K562 (cell line): ENCODE measurements at regions of chr12 and their contacts with region 1.

Region 1: DNA sequence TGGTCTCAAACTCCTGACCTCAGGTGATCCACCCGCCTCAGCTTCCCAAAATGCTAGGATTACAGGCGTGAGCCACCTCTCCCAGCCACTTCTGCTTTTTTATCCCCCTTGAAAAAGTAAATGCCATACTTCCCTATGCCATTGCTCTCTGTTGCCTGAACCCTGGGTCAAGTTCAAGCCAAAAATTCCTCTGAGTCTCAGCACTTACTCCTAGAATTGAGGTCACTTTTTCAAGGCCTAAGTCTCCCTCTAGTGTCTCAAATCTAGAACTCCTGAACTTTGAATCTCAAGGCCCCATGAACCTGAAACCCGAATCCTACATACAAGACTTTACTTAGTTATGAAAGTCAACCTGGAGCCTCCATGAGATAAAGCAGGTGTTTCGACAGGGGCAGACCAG is 1.4 kb upstream of the APOBEC1 start:
- DNase-seq: peak in 2 of 4 experiments; percentile 11 to 20
- ATAC-seq: no peak
- H3K4me3 ChIP-seq: no peak overlapping the region
- H3K27ac ChIP-seq: no peak overlapping the region
- H3K4me1 ChIP-seq: no peaks in the 10 kb centered on the region
- H3K27me3 ChIP-seq: no peaks in the 10 kb centered on the region; a peak in 2 of 5 replicates
- CTCF ChIP-seq: peak in 2 of 3 experiments; percentile 28 to 34; a peak in 4 of 6 replicates
- EP300 ChIP-seq: no peak
- POLR2A ChIP-seq: no peak
- RAD21 ChIP-seq: peak in 1 of 2 experiments; percentile 39; a peak in 2 of 4 replicates

Region 2: DNA sequence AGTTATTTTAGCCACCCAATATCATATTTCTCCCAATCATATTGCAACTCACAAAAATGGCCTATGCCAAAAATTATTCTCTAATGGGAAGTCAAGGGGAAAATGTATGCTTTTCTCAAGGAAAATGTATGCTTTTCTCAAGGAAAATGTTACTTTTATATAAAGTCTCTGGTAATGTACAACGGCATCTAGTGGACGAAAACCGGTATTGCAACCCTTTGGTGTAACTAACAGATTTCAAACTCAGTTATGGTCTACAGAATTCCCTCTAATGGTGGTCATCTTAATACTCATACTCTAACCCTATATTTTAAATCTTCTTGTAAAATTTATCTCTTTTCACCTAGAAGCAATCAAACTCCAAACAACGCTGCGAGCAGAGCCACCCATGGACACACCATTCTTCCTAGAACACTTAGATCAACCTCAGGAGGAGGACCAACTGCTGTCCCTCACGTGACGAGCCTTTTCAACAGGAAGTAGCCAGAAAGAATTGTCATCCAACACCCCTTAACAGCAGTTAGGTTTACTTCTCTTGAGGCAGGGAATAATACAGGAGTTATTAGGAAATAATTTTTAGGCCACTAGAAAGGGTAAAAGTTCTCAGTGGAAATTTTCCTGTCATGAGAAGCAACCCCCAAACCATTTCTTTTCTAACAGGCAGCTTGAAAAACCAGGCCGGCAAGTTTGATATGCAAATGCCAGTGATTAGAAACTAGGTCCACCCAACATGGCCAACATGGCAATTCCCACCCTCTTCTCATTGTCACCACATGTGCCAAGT is 21.5 kb before region 1 on chr12:
- CTCF ChIA-PET with region 1: no interaction called
- POLR2A ChIA-PET with region 1: no interaction called
- in situ Hi-C with region 1: no loop called
- intact Hi-C with region 1: loop called (anchors 1 kb)
- DNase-seq: peak; percentile 25 to 35 (median 28)
- ATAC-seq: no peak
- H3K4me3 ChIP-seq: no peak overlapping the region
- H3K27ac ChIP-seq: no peak overlapping the region
- H3K4me1 ChIP-seq: no peaks in the 10 kb centered on the region; a peak in 1 of 5 replicates
- H3K27me3 ChIP-seq: no peaks in the 10 kb centered on the region; a peak in 1 of 5 replicates
- CTCF ChIP-seq: peak; percentile 25 to 69 (median 50); a peak in 4 of 6 replicates
- EP300 ChIP-seq: no peak
- POLR2A ChIP-seq: no peak
- RAD21 ChIP-seq: no peak; a peak in 1 of 4 replicates

Region 3: DNA sequence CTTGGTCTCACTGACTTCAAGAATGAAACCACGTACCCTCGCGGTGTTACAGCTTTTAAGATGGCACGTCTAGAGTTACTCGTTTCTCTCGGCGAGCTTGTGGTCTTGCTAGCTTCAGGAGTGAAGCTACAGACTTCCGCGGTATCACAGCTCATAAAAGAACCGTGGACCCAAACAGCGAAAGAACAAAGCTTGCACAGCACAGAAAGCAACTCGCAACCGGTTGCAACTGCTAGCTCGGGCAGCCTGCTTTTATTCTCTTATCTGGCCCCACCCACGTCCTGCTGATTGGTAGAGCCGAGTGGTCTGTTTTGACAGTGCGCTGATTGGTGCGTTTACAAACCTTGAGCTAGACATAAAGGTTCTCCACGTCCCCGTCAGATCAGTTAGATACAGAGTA is 84.3 kb after region 1 on chr12:
- CTCF ChIA-PET with region 1: no interaction called
- POLR2A ChIA-PET with region 1: no interaction called
- in situ Hi-C with region 1: no loop called
- intact Hi-C with region 1: no loop called
- DNase-seq: peak in 1 of 4 experiments; percentile 2
- ATAC-seq: no peak; the same call in 2 of the 3 replicates
- H3K4me3 ChIP-seq: no peak overlapping the region
- H3K27ac ChIP-seq: no peak overlapping the region
- H3K4me1 ChIP-seq: no peaks in the 10 kb centered on the region; a peak in 1 of 5 replicates
- H3K27me3 ChIP-seq: 0 out of 5 replicates have a peak, but pooled peaks cover 0 to 4% of the 10 kb centered on the region in 2 experiments
- CTCF ChIP-seq: no peak
- EP300 ChIP-seq: no peak
- POLR2A ChIP-seq: no peak; the same call in 1 of the 2 replicates
- RAD21 ChIP-seq: no peak